HEK293 (cell line): ENCODE measurements at regions of chr7 and their contacts with region 1.

Region 1: DNA sequence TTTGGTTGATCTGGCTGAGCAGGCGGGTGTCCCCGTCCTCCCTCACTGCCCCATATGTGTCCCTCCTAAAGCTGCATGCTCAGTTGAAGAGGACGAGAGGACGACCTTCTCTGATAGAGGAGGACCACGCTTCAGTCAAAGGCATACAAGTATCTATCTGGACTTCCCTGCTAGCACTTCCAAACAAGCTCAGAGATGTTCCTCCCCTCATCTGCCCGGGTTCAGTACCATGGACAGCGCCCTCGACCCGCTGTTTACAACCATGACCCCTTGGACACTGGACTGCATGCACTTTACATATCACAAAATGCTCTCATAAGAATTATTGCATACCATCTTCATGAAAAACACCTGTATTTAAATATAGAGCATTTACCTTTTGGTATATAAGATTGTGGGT is 26.9 kb upstream of the TRIM56 start:
- H3K4me3 ChIP-seq: no peak overlapping the region
- H3K27ac ChIP-seq: no peak overlapping the region
- H3K4me1 ChIP-seq: no peaks in the 10 kb centered on the region
- CTCF ChIP-seq: no peak

Region 2: DNA sequence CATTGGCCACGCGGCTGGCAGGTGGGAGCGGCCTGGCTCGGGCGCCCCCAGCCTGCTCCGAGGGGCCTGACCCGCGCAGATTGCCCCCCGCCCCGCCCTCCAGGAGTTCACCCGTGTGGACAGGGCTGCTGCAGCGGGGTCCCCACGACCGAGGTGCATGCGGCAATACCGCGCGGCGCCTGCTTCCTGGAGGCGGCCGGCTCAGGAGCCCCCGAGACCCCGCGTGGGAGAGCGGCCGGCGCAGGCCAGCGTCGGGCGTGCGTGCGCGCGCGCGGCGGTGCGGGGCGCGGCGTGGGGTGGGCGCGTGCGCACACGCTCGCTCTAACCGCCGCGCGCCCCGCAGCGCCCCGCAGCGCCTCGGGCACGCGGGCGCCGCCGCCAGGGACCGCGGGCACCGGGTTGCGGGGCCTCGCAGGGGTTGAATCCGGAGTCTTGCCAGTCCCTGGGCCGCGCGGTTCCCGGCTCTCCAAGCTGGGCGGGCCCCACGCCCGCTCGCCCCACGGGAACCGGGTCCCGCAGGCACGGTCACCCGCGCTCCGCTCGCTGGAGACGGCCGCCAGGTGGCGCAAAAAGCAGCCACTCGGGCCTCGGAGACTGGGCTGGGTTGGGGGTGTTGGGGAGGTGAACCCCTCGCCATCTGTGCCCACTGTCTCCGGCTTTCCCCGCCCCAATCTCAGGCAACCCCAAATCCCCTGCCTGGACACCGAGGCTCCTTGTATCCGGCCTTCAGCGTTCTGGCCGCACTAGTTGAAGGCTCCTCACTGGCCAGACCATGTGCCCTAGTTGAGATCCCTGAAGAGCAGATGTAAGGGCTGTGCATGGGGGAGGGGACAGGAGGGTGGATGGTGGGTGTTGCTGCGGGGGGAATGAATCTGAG is 161.4 kb before region 1 on chr7:
- CTCF ChIA-PET with region 1: interaction called, 27 read pairs
- POLR2A ChIA-PET with region 1: no interaction called
- H3K4me3 ChIP-seq: peak overlapping the region; percentile 20
- H3K27ac ChIP-seq: peak overlapping the region; percentile 50; the same call in 1 of the 2 replicates
- H3K4me1 ChIP-seq: no peaks in the 10 kb centered on the region; the same call in 1 of the 2 replicates
- CTCF ChIP-seq: peak; percentile 93

Region 3: GRCh38 chr7:100965723-100966541 is 92.4 kb before region 1 on chr7:
- CTCF ChIA-PET with region 1: interaction called, 10 read pairs
- POLR2A ChIA-PET with region 1: no interaction called
- H3K4me3 ChIP-seq: peak overlapping the region; percentile 39
- H3K27ac ChIP-seq: no peak overlapping the region
- H3K4me1 ChIP-seq: peaks cover 4% of the 10 kb centered on the region
- CTCF ChIP-seq: peak; percentile 90

Region 4: DNA sequence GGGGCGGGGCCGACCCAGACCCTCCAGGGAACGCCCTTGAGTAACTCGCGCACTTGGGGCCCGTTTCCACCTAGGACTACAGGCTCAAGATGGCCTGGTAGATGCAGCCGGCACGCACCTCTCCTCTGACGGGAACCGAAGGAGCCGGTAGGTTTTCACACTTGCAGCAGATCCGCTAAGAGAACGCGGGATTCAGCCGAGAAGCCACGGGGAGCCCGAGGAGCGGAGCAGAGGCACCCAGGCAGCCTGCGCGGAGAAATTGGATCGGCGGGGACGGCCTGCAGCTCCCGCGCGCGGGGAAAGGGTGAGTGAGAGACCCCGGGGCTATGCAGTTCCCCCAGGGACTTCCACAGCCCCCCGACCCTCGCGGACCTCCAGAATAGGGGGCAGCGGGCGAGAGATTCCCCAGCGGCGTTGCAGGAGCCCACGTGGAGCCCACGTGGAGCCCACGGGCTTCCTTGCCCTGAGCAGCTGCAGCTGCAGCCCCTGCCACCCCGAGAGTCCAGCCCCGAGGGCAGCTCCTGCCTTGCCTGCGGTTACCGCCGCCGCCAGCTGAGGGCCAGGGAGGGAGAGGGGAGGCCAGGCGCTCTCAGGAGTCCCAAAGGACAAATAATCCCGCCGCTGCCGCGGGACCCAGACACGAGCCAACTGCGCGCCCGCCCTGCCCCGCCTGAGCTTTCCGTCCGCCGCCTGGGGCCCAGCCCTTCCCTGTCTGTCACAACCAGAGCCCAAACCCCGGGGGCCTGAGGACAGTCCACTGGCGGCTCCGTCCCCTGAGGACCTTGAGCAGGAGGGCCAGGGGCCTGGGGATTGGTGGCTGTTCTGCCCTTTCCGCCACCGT is 250.1 kb after region 1 on chr7:
- CTCF ChIA-PET with region 1: no interaction called
- POLR2A ChIA-PET with region 1: no interaction called
- H3K4me3 ChIP-seq: peak overlapping the region; percentile 58
- H3K27ac ChIP-seq: peak overlapping the region; percentile 75
- H3K4me1 ChIP-seq: no peaks in the 10 kb centered on the region
- CTCF ChIP-seq: no peak